OCI-LY7 (cell line): ENCODE measurements at regions of chr16 and their contacts with region 1.

Region 1: DNA sequence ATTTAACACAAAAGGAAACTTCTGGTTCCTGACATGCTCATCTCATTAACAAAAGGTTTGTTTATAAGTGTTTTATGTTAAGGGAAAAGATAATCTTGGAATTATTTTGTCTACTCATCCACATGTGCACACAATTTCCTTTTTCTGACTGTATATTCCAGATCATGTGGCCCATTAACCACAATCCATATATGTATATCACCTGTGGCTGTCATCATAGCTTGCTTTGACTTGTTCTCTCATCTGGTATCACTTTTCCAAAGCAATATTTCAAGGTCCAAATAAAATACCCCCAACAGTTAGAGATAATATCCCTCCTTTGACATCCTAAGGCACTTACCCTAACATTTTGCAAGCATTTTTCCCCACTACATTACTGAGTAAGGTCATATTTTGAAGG is 856.1 kb downstream of the CDH11 start:
- DNase-seq: no peak
- H3K4me3 ChIP-seq: no peak overlapping the region
- H3K27ac ChIP-seq: no peak overlapping the region
- H3K4me1 ChIP-seq: no peaks in the 10 kb centered on the region
- CTCF ChIP-seq: no peak

Region 2: GRCh38 chr16:64250866-64251265 is 14.9 kb before region 1 on chr16:
- CTCF ChIA-PET with region 1: no interaction called
- POLR2A ChIA-PET with region 1: interaction called, 18 read pairs
- intact Hi-C with region 1: no loop called
- DNase-seq: no peak
- H3K4me3 ChIP-seq: no peak overlapping the region
- H3K27ac ChIP-seq: no peak overlapping the region
- H3K4me1 ChIP-seq: no peaks in the 10 kb centered on the region
- CTCF ChIP-seq: no peak

Region 3: DNA sequence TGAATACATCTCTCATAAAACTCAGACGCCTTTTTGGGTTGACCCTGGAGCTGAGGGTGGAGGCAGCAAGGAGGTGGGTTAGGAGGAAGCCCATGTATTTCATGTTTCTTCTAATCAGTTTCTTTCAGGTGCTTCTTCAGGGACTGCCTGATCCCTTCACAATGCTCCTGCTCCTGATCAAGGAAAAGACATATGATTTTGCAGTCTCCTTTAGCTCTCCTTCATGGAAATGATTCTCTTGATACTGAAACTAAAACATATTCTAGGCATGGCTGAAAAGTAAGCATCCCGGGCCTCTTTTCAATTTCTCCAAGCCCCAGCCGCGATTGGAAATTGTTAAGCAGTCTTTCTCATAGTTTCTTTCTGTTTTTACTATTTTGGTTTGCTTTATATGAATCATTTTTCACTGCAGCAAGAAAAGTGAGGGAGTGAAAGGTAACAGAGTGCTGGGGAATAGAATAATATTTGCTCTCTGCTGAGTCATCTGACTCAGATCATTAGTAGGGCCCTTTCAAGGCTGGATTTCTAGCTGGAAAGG is 125.4 kb after region 1 on chr16:
- CTCF ChIA-PET with region 1: no interaction called
- POLR2A ChIA-PET with region 1: no interaction called
- intact Hi-C with region 1: no loop called
- DNase-seq: no peak
- H3K4me3 ChIP-seq: no peak overlapping the region
- H3K27ac ChIP-seq: no peak overlapping the region
- H3K4me1 ChIP-seq: peaks cover 6% of the 10 kb centered on the region
- CTCF ChIP-seq: no peak